GM10248 (cell line): ENCODE measurements at regions of chr7 and their contacts with region 1.

Region 1: GRCh38 chr7:141975806-141976523 is 2.4 kb upstream of the TAS2R38 start:
- DNase-seq: peak; percentile 64
- CTCF ChIP-seq: peak; percentile 88

Region 2: GRCh38 chr7:141960687-141961422 is 15.1 kb before region 1 on chr7:
- CTCF ChIA-PET with region 1: interaction called, 33 read pairs
- POLR2A ChIA-PET with region 1: no interaction called
- DNase-seq: peak; percentile 31
- CTCF ChIP-seq: no peak

Region 3: DNA sequence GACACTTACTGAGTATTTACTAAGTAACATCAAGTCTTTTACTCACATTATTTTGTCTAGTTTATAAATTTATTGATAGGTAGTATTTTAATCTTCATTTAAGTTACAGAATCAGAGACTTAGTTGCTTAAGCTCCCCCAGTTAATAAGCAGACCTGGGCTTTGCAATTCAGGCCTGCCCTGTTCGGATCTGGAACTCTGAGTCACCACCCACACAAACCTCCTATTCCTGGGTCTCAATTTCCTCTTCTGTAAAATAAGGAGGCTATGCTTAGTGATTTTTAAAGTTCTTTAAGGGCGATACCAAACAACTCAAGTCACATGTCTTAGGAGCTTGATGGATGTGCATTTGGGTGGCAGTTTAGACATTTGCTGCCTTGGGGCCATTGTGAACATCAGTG is 16.2 kb after region 1 on chr7:
- CTCF ChIA-PET with region 1: interaction called, 10 read pairs
- POLR2A ChIA-PET with region 1: no interaction called
- DNase-seq: no peak
- CTCF ChIP-seq: no peak

Region 4: DNA sequence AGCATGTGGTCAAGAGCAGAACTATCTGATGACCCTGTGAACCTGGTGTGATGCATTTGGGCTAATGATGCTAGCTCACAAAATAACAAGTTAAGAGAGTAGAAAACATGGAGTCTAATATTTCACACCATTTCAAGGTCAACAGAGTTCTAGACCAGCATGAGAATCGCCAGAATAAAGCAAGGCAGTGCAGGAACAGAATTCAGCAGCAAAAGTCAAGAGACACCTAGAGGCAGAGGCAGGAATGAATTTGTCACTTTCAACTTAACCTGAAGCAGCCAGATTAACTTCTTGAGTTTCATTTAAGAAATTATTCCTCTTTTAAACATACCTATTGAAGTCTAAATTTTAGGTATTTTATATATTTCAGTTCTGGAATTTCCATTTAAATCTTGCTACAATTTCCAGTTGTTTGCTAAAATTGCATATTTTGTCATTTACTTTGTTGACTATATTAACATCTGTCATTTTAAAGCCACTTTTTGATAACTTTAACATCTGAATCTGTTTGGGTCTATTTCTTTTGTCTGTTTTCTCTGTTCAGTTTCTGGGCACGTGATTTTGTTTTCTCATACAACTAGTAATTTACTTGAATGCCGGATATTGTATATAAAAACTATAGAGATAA is 326.1 kb after region 1 on chr7:
- CTCF ChIA-PET with region 1: interaction called, 39 read pairs
- POLR2A ChIA-PET with region 1: no interaction called
- DNase-seq: peak; percentile 39
- CTCF ChIP-seq: peak; percentile 48